ENCODE measurements at regions of chr9 and their contacts with region 1.

Region 1: DNA sequence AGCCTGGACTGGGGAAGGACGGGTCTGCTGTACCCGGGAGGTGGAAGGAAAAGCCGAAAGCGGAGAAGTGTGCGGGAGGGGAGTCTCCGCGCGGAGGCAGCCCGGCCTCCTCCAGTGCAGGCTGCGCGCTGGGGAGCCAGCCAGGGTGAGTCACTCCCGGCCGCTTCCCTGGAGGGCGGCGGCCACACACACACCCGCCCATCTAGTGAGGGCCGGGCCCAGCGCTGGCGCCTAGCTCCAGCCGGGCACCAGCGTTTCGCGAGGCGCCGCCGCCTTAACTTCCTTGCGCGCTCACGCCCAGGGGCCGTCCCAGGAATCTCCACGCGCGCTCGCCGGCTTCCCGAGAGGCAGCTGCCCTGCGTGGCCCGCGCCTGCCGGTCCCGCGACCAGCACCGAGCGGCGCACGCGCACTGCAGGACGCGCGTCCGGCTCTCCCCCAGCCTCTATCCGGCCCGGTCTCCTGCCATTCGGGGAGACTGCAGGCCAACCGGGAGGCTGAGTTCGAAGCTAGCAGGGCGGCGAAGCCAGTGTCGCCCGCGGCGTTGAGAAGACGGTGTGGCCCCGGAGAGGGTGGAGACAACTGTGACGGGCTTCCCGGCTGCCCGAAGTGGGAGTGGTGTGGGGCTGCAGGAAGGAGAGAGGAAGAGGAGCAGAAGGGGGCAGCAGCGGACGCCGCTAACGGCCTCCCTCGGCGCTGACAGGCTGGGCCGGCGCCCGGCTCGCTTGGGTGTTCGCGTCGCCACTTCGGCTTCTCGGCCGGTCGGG is at the start of gene JAK2:
- DNase-seq: peak; percentile 97
- total RNA-seq, gene JAK2: 52.8 TPM

Region 2: DNA sequence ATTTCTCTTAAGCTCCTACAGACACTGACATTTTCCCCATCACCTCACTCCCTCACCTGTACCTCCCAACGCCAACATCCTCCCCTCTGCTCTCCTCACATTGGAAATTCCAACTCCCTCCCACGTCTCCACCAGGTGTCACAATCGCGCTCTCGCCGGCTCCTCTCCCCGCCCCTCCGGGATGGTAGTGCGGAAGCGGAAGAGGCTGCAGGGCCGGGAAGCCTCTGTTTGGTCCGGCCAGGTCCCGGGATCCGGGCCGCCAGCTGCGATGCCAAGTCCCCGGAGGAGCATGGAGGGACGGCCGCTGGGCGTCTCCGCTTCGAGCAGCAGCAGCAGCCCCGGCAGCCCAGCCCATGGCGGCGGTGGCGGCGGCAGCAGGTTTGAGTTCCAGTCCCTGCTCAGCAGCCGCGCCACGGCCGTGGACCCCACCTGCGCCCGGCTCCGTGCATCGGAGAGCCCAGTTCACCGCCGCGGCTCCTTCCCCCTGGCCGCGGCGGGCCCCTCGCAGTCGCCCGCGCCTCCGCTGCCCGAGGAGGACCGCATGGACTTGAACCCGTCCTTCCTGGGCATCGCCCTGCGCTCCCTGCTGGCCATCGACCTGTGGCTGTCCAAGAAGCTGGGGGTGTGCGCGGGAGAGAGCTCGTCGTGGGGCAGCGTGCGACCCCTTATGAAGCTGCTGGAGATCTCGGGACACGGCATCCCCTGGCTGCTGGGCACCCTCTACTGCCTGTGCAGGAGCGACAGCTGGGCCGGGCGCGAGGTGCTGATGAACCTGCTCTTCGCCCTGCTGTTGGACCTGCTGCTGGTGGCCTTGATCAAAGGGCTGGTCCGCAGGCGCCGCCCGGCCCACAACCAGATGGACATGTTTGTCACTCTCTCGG is 322.5 kb before region 1 on chr9 and contains the start of gene PLPP6:
- intact Hi-C with region 1: loop called (anchors 10 kb)
- DNase-seq: peak; percentile 94
- total RNA-seq, gene PLPP6: 2.7 TPM

Region 3: DNA sequence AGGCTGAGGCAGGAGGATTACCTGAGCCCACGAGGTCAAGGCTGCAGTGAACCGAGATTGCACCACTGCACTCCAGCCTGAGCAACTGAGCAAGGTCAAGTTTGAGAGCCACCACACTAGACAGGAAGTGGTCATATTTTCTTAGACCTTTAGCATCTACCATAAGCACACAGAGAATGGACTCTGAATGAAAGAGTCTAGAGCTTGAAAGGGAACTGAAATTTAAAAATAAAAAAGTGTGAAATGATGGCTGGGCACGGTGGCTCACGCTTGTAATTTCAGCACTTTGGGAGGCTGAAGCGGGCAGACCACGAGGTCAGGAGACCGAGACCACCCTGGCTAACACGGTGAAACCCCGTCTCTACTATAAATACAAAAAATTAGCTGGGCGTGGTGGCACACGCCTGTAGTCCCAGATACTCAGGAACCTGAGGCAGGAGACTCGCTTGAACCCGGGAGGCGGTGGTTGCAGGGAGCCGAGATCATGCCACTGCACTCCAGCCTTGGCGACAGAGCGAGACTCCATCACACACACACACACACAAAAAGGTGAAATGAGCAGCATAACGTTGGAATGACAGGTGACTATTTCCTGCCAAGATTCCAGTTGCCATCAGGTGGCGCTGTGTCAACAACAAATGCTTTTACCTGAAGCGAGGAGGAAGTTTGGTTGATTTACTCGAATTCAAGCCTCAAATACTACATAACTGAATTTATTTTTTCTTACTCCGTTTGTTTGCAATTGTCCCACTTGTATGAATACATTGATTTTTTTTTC is 222.5 kb before region 1 on chr9:
- intact Hi-C with region 1: loop called (anchors 1 kb)
- DNase-seq: peak; percentile 83

Region 4: DNA sequence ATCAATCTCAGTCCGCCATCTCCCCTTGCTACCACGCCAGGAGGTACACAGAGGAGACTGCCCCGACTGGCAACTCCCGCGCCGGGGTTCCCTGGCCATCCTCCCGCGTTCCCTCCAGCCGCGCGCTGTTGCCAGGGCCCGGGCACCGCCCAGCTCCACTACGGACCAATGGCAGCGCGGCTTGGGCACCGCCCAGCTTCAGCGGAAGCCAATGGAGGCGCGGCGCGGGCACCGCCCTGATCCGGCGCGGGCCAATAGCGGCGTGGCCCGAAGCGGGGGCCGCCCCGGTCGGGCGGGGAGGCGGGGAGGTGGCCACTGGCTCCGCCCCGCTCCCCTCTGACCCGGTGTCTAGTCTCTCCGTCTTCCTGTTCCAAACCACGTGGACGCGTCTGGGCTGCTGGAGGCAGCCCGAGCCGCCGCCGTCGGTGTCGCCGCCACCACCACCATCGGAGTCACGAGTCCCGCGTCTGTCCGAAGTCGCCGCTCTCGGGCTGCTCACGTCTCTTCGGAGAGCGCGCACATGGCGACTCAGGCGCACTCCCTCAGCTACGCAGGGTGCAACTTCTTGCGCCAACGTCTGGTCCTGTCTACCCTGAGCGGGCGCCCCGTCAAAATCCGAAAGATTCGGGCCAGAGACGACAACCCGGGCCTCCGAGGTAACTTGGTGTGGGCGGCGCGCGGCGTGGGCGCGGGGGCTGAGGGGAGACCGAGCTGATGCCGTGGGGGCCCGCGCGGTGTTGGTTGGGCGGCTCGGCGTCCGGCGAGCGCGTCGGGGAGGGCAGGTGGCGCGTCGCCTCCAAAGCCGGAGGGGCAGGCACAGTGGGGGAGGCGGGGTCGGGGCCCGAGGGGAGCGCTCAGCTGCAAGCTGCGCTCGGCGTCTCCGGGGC is 192.0 kb before region 1 on chr9 and contains the start of gene RCL1:
- intact Hi-C with region 1: loop called (anchors 2 kb)
- DNase-seq: peak; percentile 99
- total RNA-seq, gene RCL1: 8.5 TPM

Region 5: GRCh38 chr9:4842734-4843133 is 142.1 kb before region 1 on chr9:
- intact Hi-C with region 1: loop called (anchors 5 kb)
- DNase-seq: no peak

Region 6: DNA sequence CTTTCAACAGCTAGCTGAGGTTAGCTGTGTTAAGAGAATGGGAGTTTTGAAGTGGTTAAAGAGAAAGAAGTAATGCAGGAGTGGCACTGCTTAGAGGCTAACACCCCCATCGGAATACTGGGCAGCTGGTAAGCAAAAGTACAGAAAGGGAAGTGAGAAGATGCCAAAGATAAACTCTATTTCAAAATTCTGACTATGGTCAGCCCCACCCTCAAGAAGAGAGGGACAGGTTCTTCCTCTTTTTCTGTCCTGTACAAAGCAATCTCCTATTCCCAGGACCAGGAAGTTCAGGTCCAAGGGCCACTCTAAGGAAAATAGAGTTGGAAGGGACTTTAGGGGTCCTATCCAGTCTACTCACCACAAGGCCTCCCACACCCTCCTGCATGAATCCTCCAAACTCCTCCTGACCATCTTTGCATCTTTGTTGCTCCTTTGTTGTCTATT is 45.7 kb before region 1 on chr9:
- intact Hi-C with region 1: loop called (anchors 5 kb)
- DNase-seq: no peak

Region 7: DNA sequence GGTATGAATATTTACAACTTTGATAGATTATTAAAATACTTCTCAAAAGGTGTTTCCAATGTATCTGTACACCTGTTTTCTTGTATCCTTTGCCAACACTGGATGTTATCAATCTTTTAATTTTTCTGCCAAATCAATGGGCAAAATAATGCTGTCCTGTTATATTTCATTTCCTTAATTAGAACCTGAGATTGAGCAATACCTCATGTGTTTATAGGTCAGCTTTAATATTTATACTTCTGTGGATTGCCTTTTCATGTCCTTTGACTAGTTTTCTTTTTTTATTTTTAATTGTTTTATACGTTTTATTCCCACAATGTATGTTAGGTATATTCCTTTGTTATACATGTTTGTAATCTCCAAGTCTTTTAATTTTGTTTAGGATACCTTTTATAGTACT is 77.8 kb after region 1 on chr9:
- intact Hi-C with region 1: no loop called
- DNase-seq: no peak

Region 8: GRCh38 chr9:5608298-5609225 is 623.8 kb after region 1 on chr9:
- intact Hi-C with region 1: loop called (anchors 10 kb)
- DNase-seq: no peak